ENCODE measurements at regions of chr3 and their contacts with region 1.

Region 1: DNA sequence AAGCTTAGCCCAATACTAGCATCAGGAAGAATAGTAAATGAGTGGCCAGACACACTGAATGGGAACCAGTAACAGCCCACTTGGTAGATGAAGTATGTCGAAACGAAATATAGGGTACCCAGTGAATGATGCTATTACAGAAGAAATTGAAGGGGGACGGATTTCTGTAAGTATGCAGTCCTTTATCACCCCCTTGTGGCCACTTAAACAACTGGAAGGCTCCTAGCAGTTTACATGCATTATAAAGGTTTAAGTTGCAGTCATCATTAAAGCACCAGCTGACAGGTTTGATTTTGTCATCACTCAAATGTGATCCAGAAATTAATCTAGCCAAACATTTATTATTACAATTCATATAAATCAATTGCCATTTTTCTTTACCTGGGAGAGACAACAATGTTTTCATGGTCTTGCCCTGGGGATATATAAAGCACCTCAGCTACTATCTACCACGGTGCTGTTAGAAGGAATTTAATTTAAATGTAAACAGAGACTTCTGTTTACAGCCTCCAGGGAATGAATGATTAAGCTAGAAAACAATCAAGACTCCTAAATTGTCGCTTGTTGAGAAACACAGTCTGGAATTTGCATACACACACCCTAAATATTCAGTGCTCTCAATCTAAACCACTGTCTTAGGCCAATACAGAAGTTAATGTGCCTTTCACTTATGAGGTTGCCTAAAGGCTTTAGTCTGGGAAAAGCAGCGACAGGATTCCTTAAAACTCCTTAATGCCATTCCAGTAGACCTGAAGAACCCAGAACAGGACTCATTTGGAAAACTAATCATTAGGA is 7.8 kb downstream of the EIF1B start:
- H3K4me3 ChIP-seq: no peak overlapping the region
- H3K27ac ChIP-seq: no peak overlapping the region
- H3K4me1 ChIP-seq: no peaks in the 10 kb centered on the region
- CTCF ChIP-seq: no peak

Region 2: GRCh38 chr3:40191850-40192448 is 125.3 kb before region 1 on chr3:
- CTCF ChIA-PET with region 1: interaction called, 44 read pairs
- POLR2A ChIA-PET with region 1: interaction called, 8 read pairs
- H3K4me3 ChIP-seq: no peak overlapping the region
- H3K27ac ChIP-seq: no peak overlapping the region
- H3K4me1 ChIP-seq: no peaks in the 10 kb centered on the region
- CTCF ChIP-seq: no peak

Region 3: GRCh38 chr3:40597441-40597840 is 280.2 kb after region 1 on chr3:
- CTCF ChIA-PET with region 1: no interaction called
- POLR2A ChIA-PET with region 1: no interaction called
- H3K4me3 ChIP-seq: no peak overlapping the region
- H3K27ac ChIP-seq: no peak overlapping the region
- H3K4me1 ChIP-seq: no peaks in the 10 kb centered on the region
- CTCF ChIP-seq: no peak

Region 4: DNA sequence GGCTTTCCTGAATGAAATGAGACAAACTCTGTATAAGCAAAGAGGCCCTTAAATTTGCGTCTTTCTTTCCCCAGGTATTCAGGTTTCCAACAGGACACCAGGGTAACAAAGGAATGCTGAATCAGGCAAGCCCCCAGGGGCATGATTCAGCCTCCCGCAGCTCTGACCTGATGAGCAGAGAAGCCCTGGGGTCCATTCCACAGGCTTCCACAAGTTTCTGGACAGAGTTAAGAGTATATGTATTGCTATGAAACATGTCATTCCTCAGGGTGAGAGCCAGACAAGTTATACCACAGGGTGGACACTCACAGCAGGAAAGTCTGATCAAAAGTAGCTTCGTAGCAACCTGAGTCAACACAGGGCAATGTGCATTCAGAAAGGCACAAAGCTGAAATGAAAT is 814.0 kb after region 1 on chr3:
- CTCF ChIA-PET with region 1: no interaction called
- POLR2A ChIA-PET with region 1: no interaction called
- H3K4me3 ChIP-seq: no peak overlapping the region
- H3K27ac ChIP-seq: no peak overlapping the region
- H3K4me1 ChIP-seq: no peaks in the 10 kb centered on the region
- CTCF ChIP-seq: no peak